IMR-90 (cell line): ENCODE measurements at regions of chr17 and their contacts with region 1.

Region 1: GRCh38 chr17:28644985-28645939 is at the start of gene BLTP2:
- DNase-seq: peak; percentile 92
- ATAC-seq: peak; percentile 99
- H3K4me3 ChIP-seq: peak within 1 kb of the TSS; percentile 87
- H3K27ac ChIP-seq: peak within 1 kb of the TSS; percentile 86
- H3K4me1 ChIP-seq: peaks cover 2% of the 10 kb centered on the region; the same call in 1 of the 2 replicates
- H3K27me3 ChIP-seq: no peaks in the 10 kb centered on the region
- CTCF ChIP-seq: no peak
- POLR2A ChIP-seq: peak; percentile 70; the same call in 1 of the 2 replicates
- RAD21 ChIP-seq: no peak
- total RNA-seq, gene BLTP2: 146 and 174 TPM in 2 replicates

Region 2: GRCh38 chr17:28240991-28241340 is 404.3 kb before region 1 on chr17:
- CTCF ChIA-PET with region 1: no interaction called
- POLR2A ChIA-PET with region 1: no interaction called
- dilution Hi-C with region 1: no loop called
- in situ Hi-C with region 1: no loop called
- intact Hi-C with region 1: no loop called
- DNase-seq: no peak
- ATAC-seq: no peak
- H3K4me3 ChIP-seq: no peak overlapping the region
- H3K27ac ChIP-seq: no peak overlapping the region
- H3K4me1 ChIP-seq: no peaks in the 10 kb centered on the region
- H3K27me3 ChIP-seq: peaks cover 14% of the 10 kb centered on the region
- CTCF ChIP-seq: no peak
- POLR2A ChIP-seq: no peak
- RAD21 ChIP-seq: no peak

Region 3: DNA sequence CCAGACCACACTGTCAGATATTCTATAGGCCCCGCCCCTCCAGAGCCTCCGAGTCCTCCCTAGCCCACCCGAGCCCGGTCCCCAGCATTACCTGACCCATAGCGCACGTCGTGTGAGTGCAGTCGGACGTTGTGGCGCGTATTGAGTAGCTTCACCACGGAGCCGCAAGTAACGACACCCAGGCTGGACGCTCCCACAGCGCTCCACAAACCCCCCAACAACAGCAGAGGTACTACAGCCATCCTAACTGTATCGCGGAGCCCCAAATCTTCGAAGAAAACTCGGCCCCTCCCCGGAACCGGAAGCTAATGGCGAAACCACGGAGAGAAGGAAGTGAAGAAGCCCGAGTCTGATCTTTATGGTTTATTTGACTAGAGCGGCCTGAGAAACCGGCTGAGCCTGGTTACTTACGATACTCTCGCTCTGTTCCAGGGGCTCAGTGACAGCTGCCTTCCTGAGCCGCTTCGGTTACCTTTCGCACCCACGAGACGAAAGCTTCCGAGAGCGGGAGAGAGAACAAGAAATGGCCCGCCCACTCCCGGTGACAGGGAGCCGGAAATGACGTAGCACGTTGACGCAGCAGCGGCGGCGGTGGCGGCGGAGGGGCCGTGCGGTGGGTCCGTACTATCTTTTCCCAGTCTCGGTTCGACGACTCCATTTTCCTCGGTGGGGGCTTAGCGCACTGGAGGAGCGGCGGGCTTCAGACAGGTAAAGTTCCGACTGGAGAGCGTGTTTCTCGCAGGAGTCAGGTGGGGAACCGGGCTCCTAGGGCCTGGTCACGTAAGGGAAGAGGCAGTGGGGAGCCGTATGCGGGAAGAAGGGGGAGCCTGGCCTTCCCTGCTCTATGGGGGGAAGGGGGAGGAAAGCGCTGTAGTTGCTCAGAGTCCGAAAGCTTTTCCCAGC is 16.6 kb after region 1 on chr17 and contains the starts of genes SDF2 and SUPT6H:
- CTCF ChIA-PET with region 1: interaction called, 6 read pairs
- POLR2A ChIA-PET with region 1: interaction called, 6 read pairs
- dilution Hi-C with region 1: no loop called
- in situ Hi-C with region 1: no loop called
- intact Hi-C with region 1: loop called (anchors 1 kb)
- DNase-seq: peak; percentile 81
- ATAC-seq: peak; percentile 88
- H3K4me3 ChIP-seq: peak within 1 kb of the TSS; percentile 73
- H3K27ac ChIP-seq: peak within 1 kb of the TSS; percentile 99
- H3K4me1 ChIP-seq: peaks cover 2% of the 10 kb centered on the region; the same call in 1 of the 2 replicates
- H3K27me3 ChIP-seq: no peaks in the 10 kb centered on the region
- CTCF ChIP-seq: no peak
- POLR2A ChIP-seq: peak; percentile 96
- RAD21 ChIP-seq: no peak
- total RNA-seq, gene SDF2: 79.2 and 81.7 TPM in 2 replicates
- total RNA-seq, gene SUPT6H: 44.8 and 45.0 TPM in 2 replicates

Region 4: DNA sequence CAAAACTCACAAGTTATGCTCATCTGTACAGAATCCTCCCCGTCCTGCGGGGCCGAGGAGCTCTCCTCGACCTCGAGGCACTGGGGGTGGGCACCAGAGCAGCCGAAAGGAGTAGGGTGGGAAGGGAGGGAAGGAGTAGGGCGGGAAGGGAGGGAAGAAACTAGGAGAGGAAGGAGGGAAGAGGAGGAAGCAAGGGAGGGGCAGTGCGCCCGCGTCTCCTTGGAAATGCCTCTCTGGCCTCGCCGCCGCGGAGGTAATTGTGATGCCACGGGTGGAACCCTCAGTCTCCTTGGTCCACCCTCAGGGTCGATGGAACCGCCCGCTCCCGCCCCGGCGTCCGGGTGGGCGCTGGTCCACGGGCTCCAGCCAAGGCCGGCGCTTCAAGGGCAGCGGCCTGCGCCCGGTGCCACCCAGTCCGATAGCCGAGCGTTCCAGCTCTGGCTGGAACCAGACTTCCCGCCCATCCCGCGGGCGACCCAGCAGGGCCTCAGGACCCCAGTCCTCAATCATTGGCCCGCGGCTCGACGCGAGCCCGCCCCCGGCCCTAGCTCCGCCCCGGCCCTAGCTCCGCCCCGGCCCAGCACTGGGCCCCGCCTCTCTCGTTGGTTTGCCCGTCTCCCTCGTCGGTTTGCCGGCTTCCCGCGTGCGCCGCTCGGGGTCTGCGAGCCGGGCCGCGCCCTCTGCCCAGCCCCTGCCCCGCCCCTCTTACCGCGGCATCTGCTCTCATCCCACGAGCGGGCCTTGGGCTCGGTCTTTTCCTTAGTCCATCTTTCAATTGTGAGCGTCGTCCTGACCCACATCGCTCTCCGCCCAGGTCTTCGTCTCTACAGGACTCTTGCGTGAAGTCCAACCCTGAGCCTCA is 65.8 kb after region 1 on chr17:
- CTCF ChIA-PET with region 1: interaction called, 7 read pairs
- POLR2A ChIA-PET with region 1: no interaction called
- dilution Hi-C with region 1: no loop called
- in situ Hi-C with region 1: no loop called
- intact Hi-C with region 1: loop called (anchors 2 kb)
- DNase-seq: peak; percentile 85
- ATAC-seq: peak; percentile 95
- H3K4me3 ChIP-seq: peak overlapping the region; percentile 65
- H3K27ac ChIP-seq: peak overlapping the region; percentile 97
- H3K4me1 ChIP-seq: peaks cover 12% of the 10 kb centered on the region
- H3K27me3 ChIP-seq: no peaks in the 10 kb centered on the region
- CTCF ChIP-seq: no peak
- POLR2A ChIP-seq: peak; percentile 84
- RAD21 ChIP-seq: no peak